ENCODE measurements at regions of chr13 and their contacts with region 1.

Region 1: DNA sequence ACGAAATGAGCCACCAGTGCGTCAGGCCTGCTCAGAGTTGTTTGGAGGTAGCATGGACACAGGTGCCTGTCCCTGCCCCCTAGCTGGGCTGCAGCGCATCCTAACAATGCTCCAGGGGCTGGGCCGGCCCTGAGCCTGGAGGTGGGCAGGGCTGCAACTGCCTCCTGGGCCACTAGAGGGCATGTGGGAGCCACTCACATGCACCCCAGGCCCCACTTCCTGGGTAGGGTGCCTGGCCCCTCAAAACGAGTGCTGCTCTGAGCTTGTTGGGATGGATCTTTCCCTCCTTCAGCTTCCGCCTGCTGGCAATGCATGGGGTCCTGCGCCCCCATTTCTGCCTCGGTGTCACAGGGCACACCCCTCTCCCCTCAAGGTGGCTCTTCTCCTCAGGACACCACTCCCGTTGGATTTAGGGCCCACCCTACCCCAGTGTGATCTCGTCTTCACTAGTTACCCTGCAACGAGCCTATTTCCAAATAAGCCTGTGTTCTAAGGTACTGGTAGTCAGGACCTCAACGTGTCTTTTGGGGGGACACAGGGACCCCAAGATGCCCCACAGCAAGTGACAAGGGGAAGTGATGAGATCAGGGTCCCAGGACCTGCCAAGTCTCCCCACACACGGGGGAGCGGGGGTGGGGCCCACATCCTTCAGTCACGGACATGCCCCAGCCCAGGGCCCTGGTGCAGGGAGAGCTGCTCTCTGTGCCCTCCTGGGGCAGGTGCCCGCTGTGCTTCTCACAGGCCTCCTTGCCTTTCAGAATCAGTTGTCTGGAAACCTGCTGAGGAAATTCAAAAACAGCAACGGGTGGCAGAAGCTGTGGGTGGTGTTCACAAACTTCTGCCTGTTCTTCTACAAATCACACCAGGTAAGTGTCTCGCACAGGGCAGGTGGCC is 131.3 kb downstream of the STK24 start:
- DNase-seq: peak; percentile 36 to 82
- H3K4me3 ChIP-seq: no peak overlapping the region
- H3K4me1 ChIP-seq: no peaks in the 10 kb centered on the region; the same call in 1 of the 2 replicates
- H3K27me3 ChIP-seq: no peaks in the 10 kb centered on the region

Region 2: DNA sequence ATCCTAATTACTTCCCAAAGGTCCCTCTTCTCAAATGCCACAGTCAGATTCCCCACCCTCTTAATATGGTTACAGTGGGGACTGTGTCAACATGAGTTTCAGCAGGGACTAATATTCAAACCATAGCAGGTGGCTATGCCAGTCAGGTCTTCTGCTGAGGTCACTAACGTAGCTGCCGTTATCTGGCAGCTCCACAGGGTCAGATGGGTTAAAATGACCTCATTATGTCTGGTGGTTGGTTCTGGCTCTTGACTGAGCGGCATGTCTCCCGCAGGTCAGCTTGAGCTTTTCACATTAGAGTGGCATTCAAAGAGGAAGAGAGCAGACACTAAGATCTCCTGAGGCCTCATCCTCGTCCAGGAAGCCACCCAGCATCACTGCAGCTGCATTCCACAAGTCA is 513.6 kb before region 1 on chr13:
- in situ Hi-C with region 1: no loop called
- DNase-seq: no peak
- H3K4me3 ChIP-seq: no peak overlapping the region
- H3K4me1 ChIP-seq: peaks cover 49% of the 10 kb centered on the region
- H3K27me3 ChIP-seq: no peaks in the 10 kb centered on the region

Region 3: DNA sequence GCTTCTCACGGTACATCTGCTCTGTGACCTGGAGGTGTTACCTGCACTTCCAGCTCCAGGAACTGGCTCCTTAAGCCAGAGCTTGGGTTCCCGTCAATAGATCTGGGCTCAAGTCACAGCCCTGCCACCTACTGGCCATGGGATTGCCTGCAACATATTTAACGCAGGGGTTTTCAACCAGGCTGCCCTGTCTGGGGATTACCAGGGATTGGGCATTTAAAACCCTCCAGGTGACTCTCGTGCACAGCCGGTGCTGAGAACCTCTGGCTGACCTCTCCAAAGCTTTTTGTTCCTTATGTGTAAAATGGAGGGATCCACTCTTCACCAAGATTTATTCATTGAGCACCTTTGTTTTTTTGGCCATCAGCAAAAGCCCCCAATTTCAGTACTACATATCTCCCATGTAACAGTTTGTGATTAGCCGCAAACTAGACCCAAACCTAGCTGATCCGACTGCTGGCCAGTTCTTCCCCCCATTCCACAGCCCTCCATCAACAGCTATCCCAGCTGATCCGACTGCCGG is 207.9 kb after region 1 on chr13:
- in situ Hi-C with region 1: loop called (anchors 5 kb)
- DNase-seq: peak; percentile 71 to 87
- H3K4me3 ChIP-seq: no peak overlapping the region
- H3K4me1 ChIP-seq: peaks cover 10% of the 10 kb centered on the region
- H3K27me3 ChIP-seq: no peaks in the 10 kb centered on the region

Region 4: GRCh38 chr13:98842864-98843481 is 397.4 kb after region 1 on chr13:
- in situ Hi-C with region 1: loop called (anchors 25 kb)
- DNase-seq: peak; percentile 66 to 90
- H3K4me3 ChIP-seq: no peak overlapping the region
- H3K4me1 ChIP-seq: peaks cover 12% of the 10 kb centered on the region
- H3K27me3 ChIP-seq: no peaks in the 10 kb centered on the region

Region 5: DNA sequence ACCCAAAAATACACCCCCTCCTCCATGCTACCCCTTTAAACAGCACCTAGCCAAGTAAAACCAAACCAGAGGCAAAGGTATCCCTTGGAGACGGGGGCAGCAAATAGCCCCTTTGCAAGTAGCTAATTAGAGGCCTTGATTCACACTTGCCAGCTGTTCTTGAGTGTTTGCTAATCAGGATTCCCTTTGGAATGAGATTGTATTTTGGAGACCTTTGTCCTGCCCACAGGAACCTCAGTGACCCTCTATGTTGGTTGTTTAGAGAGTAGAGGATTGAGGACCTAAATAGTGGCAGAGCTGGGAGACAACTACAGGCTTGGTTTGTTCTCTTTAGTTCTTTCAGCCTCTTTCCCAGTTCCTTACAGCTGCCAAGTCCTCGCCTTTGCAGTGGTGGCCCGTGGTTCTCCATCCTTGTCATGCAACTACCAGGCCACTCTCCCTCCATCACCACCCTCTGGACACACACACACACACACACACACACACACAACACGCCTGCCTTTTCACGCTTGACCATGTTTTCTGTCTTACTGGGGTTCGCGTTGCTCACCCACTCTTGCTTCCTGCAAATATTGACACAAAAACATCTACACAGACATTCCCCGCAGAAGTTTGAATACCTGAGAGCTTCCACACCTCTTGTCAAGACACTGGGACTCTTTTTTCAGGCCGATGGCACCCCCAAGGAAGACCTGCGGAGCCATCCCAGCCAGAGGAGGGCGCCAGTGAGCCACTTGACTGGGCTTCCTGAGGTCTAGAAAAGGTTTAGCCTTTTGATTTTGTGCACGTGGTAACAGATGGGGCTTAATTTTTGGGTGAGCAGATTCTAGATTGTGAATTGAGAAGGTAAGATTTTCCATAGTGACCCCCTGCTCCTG is 941.6 kb after region 1 on chr13:
- in situ Hi-C with region 1: no loop called
- DNase-seq: peak in 1 of 2 experiments; percentile 81
- H3K4me3 ChIP-seq: no peak overlapping the region
- H3K4me1 ChIP-seq: no peaks in the 10 kb centered on the region
- H3K27me3 ChIP-seq: no peaks in the 10 kb centered on the region

Measured in HAP-1 (cell line).